SK-N-SH (cell line): ENCODE measurements at regions of chrX and their contacts with region 1.

Region 1: DNA sequence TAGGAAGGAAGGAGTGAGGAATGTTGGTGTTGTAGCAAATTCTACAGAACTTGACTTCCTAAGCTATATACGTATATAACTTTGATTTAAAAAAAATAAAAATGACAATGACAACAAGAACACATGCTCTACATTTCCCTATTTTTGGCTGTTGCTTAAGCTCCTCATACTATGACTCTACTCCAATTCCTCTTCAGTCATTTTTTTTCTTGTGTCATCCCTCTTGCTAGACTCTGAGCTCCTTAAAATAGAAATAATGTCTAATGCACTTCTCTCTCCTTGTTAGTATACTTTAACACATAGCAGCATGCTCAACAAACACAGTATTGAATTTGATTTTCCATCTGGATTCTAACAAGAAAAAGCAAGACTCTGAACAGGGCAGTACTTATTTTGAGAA is 144.0 kb downstream of the HDX start:
- DNase-seq: no peak
- H3K4me3 ChIP-seq: no peak overlapping the region
- H3K27ac ChIP-seq: no peak overlapping the region
- H3K4me1 ChIP-seq: no peaks in the 10 kb centered on the region; a peak in 1 of 4 replicates
- H3K27me3 ChIP-seq: no peaks in the 10 kb centered on the region
- CTCF ChIP-seq: no peak
- EP300 ChIP-seq: no peak
- RAD21 ChIP-seq: no peak

Region 2: GRCh38 chrX:84339507-84340364 is 18.5 kb before region 1 on chrX:
- CTCF ChIA-PET with region 1: interaction called, 13 read pairs
- POLR2A ChIA-PET with region 1: no interaction called
- DNase-seq: peak; percentile 6
- H3K4me3 ChIP-seq: no peak overlapping the region
- H3K27ac ChIP-seq: no peak overlapping the region
- H3K4me1 ChIP-seq: no peaks in the 10 kb centered on the region
- H3K27me3 ChIP-seq: no peaks in the 10 kb centered on the region
- CTCF ChIP-seq: peak; percentile 83
- EP300 ChIP-seq: no peak
- RAD21 ChIP-seq: peak; percentile 42